ENCODE measurements at regions of chr2 and their contacts with region 1.

Region 1: GRCh38 chr2:176814306-176815052 is 398.1 kb upstream of the HNRNPA3 start:
- DNase-seq: peak; percentile 38
- H3K4me3 ChIP-seq: no peak overlapping the region
- H3K27ac ChIP-seq: no peak overlapping the region
- H3K4me1 ChIP-seq: no peaks in the 10 kb centered on the region
- H3K27me3 ChIP-seq: peaks cover 0 to 9% of the 10 kb centered on the region in 2 experiments
- CTCF ChIP-seq: peak; percentile 16 to 17
- POLR2A ChIP-seq: no peak

Region 2: DNA sequence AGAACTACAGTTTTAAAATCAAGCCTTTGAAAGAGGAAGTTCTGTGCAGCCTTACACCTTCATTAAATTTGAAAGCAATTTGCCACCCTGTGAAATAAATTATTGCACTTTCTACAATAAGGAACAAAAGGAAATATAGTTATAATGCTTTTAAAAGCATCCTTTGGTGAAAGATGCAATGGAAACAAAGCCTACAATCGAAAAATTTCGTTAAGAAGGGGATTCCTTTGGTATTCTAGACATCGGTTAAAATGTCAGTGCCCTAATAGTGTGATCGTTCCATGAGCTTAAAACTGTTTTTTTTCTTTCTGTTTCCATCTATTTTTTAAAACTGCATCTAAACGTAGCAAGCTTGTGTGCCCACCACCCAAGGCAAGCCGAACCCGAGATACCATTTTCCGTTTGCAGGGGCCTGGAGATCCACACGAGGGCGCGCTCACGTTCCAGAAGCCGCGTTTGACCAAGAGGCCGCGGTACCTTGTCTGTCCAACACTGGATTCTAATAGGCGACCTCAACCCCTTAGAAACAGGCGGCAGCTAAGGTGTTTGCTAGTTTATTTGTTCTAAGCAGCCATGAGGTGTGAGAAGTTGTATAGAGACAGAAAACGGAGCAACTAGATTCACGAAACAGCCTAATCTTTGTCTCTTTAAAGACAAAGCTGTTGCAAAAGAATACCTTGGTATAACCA is 703.4 kb before region 1 on chr2:
- CTCF ChIA-PET with region 1: interaction called, 23 read pairs
- POLR2A ChIA-PET with region 1: no interaction called
- dilution Hi-C with region 1: no loop called
- intact Hi-C with region 1: loop called (anchors 1 kb)
- DNase-seq: peak; percentile 74
- H3K4me3 ChIP-seq: no peak overlapping the region
- H3K27ac ChIP-seq: no peak overlapping the region
- H3K4me1 ChIP-seq: no peaks in the 10 kb centered on the region
- H3K27me3 ChIP-seq: peaks cover 81 to 96% of the 10 kb centered on the region in 2 experiments
- CTCF ChIP-seq: peak; percentile 87 to 93
- POLR2A ChIP-seq: no peak

Region 3: DNA sequence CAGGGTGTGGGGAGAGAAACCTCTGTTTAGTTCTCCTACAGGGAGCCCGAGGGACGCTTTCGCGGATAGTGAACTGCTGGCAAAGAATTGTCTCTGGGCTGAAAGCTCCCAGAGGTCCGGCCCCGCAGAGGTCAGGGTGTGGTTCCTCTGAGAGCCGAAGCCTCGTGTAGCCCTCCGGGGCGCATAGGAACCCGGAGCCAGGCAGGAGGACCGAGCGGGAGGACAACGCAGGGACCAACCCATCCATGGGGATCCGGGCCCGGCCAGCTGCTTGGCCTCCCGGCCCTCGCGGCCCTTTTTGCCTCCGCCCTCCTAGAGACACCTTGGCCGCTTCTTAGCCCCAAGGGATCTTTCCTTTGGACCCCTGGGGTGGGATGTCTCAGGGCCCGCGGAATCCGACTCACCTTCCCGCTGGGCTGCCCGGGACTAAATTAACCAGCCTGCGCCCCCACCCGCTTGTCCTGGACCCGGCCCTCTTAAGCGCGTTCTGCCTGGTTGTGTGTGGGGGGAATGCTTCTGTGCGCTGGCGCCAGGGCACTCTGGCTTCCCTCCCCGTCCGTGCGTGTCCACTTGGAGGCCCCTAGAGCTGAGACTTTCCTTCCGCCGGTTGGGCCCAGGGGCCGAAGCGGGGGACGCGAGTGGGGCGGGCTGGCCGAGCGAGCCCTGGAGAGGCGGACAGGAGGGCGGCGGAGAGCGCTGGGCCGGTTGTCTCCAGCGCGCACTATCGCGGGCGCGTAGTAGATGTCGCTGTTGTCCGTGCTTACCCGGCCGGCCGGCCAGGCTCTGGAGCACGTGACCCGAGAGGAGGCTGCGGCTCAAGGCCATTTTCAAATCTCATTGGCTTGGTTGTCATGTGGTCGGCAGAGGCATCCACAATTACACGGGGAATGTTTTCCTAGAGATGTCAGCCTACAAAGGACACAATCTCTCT is 698.3 kb before region 1 on chr2 and contains the start of gene HOXD10:
- CTCF ChIA-PET with region 1: interaction called, 23 read pairs
- POLR2A ChIA-PET with region 1: no interaction called
- dilution Hi-C with region 1: no loop called
- intact Hi-C with region 1: loop called (anchors 1 kb)
- DNase-seq: peak; percentile 78
- H3K4me3 ChIP-seq: peak within 1 kb of the TSS in 1 of 3 experiments; percentile 10
- H3K27ac ChIP-seq: no peak within 1 kb of the TSS
- H3K4me1 ChIP-seq: peaks cover 4% of the 10 kb centered on the region
- H3K27me3 ChIP-seq: peaks cover 86 to 98% of the 10 kb centered on the region in 2 experiments
- CTCF ChIP-seq: peak; percentile 59 to 78
- POLR2A ChIP-seq: no peak
- total RNA-seq, gene HOXD10: not detected in 2 replicates

Region 4: GRCh38 chr2:176638167-176639015 is 176.1 kb before region 1 on chr2:
- CTCF ChIA-PET with region 1: interaction called, 5 read pairs
- POLR2A ChIA-PET with region 1: no interaction called
- dilution Hi-C with region 1: no loop called
- intact Hi-C with region 1: loop called (anchors 1 kb)
- DNase-seq: peak; percentile 74
- H3K4me3 ChIP-seq: peak overlapping the region; percentile 9 to 59 (median 55)
- H3K27ac ChIP-seq: peak overlapping the region; percentile 79
- H3K4me1 ChIP-seq: peaks cover 25% of the 10 kb centered on the region
- H3K27me3 ChIP-seq: no peaks in the 10 kb centered on the region
- CTCF ChIP-seq: peak; percentile 63 to 83
- POLR2A ChIP-seq: no peak

Region 5: DNA sequence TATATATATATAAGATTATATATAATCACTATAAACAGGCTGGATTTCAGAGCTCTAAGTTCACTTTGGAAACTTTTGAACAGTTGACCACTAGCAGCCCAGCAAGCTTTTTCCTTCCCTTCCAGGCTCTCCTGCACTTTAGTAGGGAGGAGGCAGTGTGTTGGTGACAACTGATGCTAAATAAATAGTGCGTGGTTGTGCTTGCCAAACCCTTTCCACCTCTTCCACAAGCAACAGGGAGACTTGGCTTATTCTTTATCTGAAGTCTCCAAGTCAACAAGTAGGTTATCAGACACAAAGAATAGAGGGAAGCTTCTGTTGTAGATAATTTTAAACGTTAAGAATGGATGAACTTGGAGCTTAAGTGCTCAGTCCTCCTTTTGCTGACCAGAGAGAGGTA is 10.1 kb before region 1 on chr2:
- CTCF ChIA-PET with region 1: interaction called, 33 read pairs
- POLR2A ChIA-PET with region 1: no interaction called
- dilution Hi-C with region 1: no loop called
- intact Hi-C with region 1: no loop called
- DNase-seq: no peak
- H3K4me3 ChIP-seq: no peak overlapping the region
- H3K27ac ChIP-seq: no peak overlapping the region
- H3K4me1 ChIP-seq: no peaks in the 10 kb centered on the region
- H3K27me3 ChIP-seq: peaks cover 0 to 1% of the 10 kb centered on the region in 2 experiments
- CTCF ChIP-seq: no peak
- POLR2A ChIP-seq: no peak

Region 6: DNA sequence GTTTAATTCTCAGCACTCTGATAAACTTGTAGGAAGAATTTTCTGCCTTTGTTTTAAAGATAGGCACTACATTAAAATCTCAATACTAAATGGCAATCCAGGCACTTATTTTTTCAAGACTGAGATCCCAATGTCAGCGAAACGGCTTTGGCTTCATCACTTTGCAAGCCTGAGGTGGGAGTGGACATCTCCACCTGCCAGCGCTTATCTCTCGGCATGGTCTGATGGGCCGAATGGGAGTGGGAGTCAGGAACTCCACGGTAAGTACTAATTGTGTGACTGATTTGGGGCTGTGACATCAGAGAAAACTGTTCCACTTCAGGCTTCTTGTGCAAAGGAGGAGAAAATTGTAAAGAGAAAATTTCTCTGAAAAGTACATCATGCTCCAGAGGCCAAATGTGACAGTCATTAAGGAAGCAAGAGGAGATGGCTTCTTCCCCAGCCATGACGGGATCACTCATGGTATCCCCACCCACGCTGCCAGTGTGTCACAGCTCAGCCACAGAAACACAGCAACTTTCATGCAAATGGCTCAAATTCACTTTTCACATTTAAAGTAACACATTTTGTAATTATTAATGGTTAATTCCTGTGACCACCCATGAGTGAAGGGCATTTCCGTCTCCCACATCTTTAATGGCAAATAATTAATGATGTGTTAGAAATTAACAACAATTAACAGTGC is 12.6 kb after region 1 on chr2:
- CTCF ChIA-PET with region 1: interaction called, 23 read pairs
- POLR2A ChIA-PET with region 1: no interaction called
- dilution Hi-C with region 1: no loop called
- intact Hi-C with region 1: no loop called
- DNase-seq: no peak
- H3K4me3 ChIP-seq: no peak overlapping the region
- H3K27ac ChIP-seq: no peak overlapping the region
- H3K4me1 ChIP-seq: no peaks in the 10 kb centered on the region
- H3K27me3 ChIP-seq: peaks cover 10 to 16% of the 10 kb centered on the region in 2 experiments
- CTCF ChIP-seq: no peak
- POLR2A ChIP-seq: no peak

Region 7: DNA sequence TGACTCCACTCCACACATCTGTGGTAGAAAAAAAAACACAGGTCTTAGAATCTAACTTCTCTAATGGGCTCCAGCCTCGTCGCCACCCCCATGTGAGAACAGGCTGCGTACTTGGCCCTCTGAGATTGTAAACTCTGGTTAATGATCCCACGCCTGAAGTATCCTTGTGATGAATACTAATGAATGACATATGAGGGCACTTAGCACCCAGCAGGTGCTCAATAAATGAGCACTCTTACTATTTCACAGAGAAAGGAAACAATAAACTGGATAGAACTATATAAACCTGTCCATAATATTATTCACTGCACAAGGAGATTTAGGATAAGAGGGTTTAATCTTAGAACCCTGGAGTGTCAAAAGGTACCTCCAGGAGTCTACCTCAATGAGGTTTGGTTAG is 88.0 kb after region 1 on chr2:
- CTCF ChIA-PET with region 1: no interaction called
- POLR2A ChIA-PET with region 1: no interaction called
- dilution Hi-C with region 1: no loop called
- intact Hi-C with region 1: no loop called
- DNase-seq: no peak
- H3K4me3 ChIP-seq: no peak overlapping the region
- H3K27ac ChIP-seq: no peak overlapping the region
- H3K4me1 ChIP-seq: no peaks in the 10 kb centered on the region
- H3K27me3 ChIP-seq: peaks cover 0 to 2% of the 10 kb centered on the region in 2 experiments
- CTCF ChIP-seq: no peak
- POLR2A ChIP-seq: no peak

Measured in endothelial cell of umbilical vein (primary cell).